ENCODE measurements at regions of chr12 and their contacts with region 1.

Region 1: DNA sequence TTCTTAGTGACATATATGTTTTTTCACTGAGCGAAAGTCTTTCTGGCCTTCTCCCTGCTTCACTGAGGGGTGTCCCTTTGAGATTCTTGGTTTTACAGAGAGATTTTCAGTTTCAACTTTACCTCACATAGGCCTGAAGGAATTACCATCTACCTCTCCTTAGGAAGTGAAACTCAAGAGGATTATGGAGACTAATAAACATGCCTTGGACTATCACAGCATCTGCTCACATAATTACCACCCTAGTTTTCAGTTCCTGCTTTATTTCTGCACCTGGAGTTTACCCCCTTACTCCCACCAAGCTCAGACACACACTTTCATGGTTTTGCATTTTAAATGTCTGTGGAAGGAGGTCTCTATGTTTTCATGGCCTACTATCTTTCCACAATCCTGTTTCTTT is 118.3 kb upstream of the SCAF11 start:
- DNase-seq: no peak
- H3K4me3 ChIP-seq: no peak overlapping the region
- H3K27ac ChIP-seq: no peak overlapping the region
- H3K4me1 ChIP-seq: peaks cover 0 to 10% (median 4%) of the 10 kb centered on the region in 4 donors
- H3K27me3 ChIP-seq: no peaks in the 10 kb centered on the region
- CTCF ChIP-seq: no peak

Region 2: DNA sequence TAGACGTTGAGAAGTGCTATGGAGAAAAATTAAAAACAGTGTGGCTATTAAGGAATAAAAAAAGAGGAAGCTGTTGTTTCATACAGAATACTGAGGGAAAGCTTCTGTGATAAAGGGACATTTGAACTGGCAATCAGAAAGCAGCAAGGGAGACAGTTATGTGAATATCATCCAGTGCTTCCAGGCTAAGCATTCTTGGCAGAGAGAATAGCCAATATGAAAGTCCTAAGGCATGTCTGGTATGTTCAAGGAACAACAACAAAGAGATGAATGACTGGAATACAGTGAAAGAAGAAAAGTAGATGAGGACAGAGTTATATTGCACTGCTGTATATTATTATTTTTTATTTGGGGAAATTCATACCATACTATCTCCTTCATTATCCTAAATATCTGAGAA is 142.2 kb before region 1 on chr12:
- intact Hi-C with region 1: no loop called
- DNase-seq: no peak
- H3K4me3 ChIP-seq: no peak overlapping the region
- H3K27ac ChIP-seq: peak overlapping the region in 1 of 2 donors; percentile 17
- H3K4me1 ChIP-seq: peaks cover 0 to 71% (median 23%) of the 10 kb centered on the region in 4 donors
- H3K27me3 ChIP-seq: no peaks in the 10 kb centered on the region
- CTCF ChIP-seq: no peak

Region 3: DNA sequence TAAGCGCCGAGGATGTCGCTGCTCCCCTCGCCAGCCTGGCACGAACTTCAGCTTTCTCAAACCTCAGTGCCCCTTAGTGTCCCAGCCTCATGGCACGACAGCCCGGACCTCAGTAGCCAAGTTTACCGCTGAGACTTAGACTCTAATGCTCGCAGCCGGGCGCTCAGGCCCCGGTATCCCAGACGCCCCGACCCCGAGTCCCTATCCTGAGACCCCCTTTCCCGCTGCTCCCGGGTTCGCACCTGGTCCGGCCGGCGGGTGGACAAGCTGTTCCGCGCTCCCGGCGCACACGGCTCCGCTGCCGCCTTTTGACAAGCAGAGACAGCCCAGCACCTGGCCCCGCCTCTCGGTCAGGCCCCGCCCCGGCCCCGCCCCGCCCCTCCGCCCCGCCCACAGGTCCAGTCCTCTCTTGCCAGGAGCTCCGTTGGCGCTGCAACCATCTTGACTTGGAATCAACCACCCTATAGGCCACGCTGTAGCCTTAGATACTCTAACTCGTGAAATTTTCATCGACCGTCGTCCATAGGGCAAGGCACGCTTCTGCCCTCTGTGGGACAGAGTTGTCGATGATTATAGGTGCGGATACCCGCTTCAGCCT is 1796.1 kb after region 1 on chr12 and contains the start of gene VDR:
- intact Hi-C with region 1: loop called (anchors 5 kb)
- DNase-seq: peak; percentile 70 to 87
- H3K4me3 ChIP-seq: peak within 1 kb of the TSS; percentile 61 to 69
- H3K27ac ChIP-seq: peak within 1 kb of the TSS; percentile 51 to 69
- H3K4me1 ChIP-seq: peaks cover 0 to 53% (median 21%) of the 10 kb centered on the region in 4 donors
- H3K27me3 ChIP-seq: peaks cover 0 to 4% of the 10 kb centered on the region in 2 donors
- CTCF ChIP-seq: no peak

Measured in tibial artery (tissue), 4 donors.